ENCODE measurements at regions of chr2 and their contacts with region 1.

Region 1: DNA sequence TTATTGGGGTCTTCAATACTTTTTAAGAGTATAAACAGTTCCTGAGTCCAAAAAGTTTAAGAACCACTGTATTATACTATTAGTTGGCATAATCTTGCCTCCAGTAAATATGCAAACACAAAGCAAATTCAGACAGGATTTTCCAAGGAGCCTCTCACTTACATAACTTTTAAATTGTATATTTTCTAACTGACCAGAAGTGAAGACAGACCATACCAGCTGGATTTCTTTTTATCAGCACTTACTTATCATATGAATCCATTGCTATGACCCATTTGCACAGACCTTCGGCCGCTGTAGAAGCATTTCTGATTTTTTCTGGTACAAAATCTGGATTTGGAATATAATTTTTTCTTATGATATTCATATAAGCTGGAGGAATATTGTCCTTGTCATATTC is 200.1 kb downstream of the SLC39A10 start:
- DNase-seq: no peak
- H3K4me3 Mint-ChIP-seq: no peak overlapping the region
- H3K27ac Mint-ChIP-seq: no peak overlapping the region
- H3K4me1 Mint-ChIP-seq: no peaks in the 10 kb centered on the region
- H3K27me3 Mint-ChIP-seq: peaks cover 11% of the 10 kb centered on the region

Region 2: DNA sequence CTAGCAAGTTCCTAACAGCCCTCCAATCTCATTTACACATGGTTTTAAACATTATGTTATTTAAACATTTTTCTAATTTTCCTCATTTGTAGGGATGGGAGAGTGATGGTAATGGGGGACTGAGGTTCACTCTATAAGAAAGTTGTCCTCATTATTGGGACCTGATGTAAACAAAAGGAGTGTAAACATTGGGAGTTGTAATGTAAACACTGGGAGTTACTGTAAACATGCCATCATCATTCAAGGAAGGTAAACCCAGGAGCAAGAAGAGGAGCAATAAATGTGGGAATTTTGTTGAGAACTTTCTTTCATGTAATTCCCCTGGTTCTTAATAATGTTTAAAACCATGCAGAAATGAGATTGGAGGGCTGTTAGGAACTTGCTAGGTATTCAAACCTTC is 1800.4 kb after region 1 on chr2:
- intact Hi-C with region 1: loop called (anchors 5 kb)
- DNase-seq: no peak
- H3K4me3 Mint-ChIP-seq: no peak overlapping the region
- H3K27ac Mint-ChIP-seq: no peak overlapping the region
- H3K4me1 Mint-ChIP-seq: no peaks in the 10 kb centered on the region
- H3K27me3 Mint-ChIP-seq: peaks cover 6% of the 10 kb centered on the region